Psoas muscle (tissue), 8 donors: ENCODE measurements at regions of chr16 and their contacts with region 1.

Region 1: GRCh38 chr16:79542237-79542774 is 58.2 kb downstream of the MAF start:
- DNase-seq: peak; percentile 58 to 83
- ATAC-seq: peak; percentile 83 to 93 (median 88)
- H3K4me3 ChIP-seq: peak overlapping the region; percentile 37
- H3K27ac ChIP-seq: peak overlapping the region; percentile 78
- H3K4me1 ChIP-seq: peaks cover 25% of the 10 kb centered on the region
- H3K27me3 ChIP-seq: no peaks in the 10 kb centered on the region
- CTCF ChIP-seq: no peak

Region 2: GRCh38 chr16:79580453-79581191 is 38.3 kb after region 1 on chr16:
- intact Hi-C with region 1: loop called (anchors 5 kb)
- DNase-seq: no peak
- ATAC-seq: peak in 1 of 4 donors; percentile 55
- H3K4me3 ChIP-seq: no peak overlapping the region
- H3K27ac ChIP-seq: no peak overlapping the region
- H3K4me1 ChIP-seq: peaks cover 7% of the 10 kb centered on the region
- H3K27me3 ChIP-seq: no peaks in the 10 kb centered on the region
- CTCF ChIP-seq: no peak

Region 3: DNA sequence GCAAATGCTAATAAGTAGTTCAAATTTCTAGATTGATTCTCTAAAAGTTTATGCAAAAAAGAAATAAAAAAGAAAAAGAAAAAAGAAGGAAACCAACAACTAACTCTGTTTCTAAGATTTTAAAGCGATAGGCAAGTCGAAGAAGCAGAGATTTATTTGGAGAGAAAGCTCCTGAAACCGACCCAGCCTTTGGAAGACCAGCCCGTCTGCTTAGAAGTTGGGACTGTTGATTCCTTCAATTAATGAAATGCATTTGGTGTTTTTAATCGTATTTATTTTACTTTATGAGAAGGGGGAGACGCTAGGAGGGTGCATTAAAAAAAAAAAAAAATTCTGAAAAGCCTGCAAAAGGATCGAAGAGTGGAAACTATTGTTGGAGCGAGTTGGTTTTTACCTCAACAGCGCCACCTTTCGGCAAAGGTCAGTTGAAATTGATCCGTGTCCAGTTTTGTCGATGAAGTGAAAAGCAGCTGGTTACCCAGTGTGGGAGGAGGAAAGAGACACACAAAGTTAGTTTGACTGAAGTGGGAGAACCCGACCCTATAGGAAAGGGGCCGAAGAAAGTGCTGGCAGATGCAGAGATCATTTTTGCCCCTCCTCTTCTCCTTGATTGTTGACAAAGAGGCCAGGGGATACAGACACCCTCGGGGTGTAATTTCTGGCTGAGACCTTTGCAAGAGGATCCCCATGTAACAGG is 59.8 kb after region 1 on chr16:
- intact Hi-C with region 1: no loop called
- DNase-seq: peak; percentile 78 to 86
- ATAC-seq: peak in 3 of 4 donors; percentile 18 to 48 (median 23)
- H3K4me3 ChIP-seq: peak overlapping the region; percentile 80
- H3K27ac ChIP-seq: peak overlapping the region; percentile 94
- H3K4me1 ChIP-seq: peaks cover 13% of the 10 kb centered on the region
- H3K27me3 ChIP-seq: no peaks in the 10 kb centered on the region
- CTCF ChIP-seq: peak; percentile 79